CD4-positive, alpha-beta T cell (primary cell): ENCODE measurements at regions of chr7 and their contacts with region 1.

Region 1: GRCh38 chr7:129502376-129502776 is at the start of gene SMKR1:
- DNase-seq: peak; percentile 88 to 98 (median 94)
- ATAC-seq: peak; percentile 96
- H3K4me3 ChIP-seq: peak within 1 kb of the TSS; percentile 66
- H3K4me3 Mint-ChIP-seq: peak within 1 kb of the TSS; percentile 90
- H3K27ac ChIP-seq: peak within 1 kb of the TSS in 1 of 2 donors; percentile 13
- H3K27ac Mint-ChIP-seq: peak within 1 kb of the TSS; percentile 52
- H3K4me1 ChIP-seq: peaks cover 19% of the 10 kb centered on the region
- H3K4me1 Mint-ChIP-seq: peaks cover 6% of the 10 kb centered on the region
- H3K27me3 ChIP-seq: no peaks in the 10 kb centered on the region
- H3K27me3 Mint-ChIP-seq: no peaks in the 10 kb centered on the region
- CTCF ChIP-seq: no peak
- total RNA-seq, gene SMKR1: 0.22 to 0.49 TPM

Region 2: DNA sequence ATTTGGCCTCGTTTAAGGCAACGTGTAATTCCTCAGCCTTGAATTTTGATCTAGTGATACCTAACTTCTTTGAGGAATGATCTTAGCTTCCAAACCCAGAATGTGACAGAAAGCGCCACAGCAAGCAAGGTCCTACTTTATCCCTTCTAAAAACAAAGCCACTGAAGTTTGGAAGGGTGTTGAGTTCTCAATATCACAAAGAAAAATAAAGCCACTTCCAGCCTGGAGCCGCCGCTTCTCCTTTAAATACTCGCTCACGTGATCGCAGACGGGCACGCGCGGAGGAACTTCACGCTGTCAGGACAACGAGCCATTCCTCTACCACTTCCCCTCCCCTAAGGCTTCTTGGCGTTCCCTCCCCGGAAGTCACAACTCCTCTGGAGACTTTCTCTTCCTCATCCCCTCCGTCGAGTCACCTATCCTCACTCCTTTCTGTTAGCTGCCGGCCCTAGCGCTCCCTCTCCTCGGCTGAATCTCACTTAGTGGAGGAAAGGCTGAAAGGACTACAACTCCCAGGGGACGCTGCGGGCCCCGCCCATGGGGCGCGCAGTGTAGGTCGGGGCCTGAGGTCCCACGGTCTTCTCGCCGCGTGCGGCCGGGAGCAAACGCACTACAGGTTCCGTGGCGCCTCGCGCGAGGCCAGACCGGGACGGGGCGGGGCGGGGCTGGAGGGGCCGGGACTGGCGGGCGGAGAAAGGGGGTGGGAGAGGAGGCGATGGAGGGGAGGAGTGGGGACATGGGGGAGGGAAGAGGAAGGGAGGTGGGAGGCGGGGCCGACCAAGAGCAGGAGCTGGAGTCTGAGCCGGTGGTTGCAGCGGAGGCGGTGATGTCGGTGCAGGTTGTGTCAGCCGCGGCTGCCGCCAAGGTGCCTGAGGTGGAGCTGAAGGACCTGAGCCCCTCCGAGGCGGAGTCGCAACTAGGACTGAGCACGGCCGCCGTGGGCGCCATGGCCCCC is 277.8 kb before region 1 on chr7 and contains the start of gene AHCYL2:
- CTCF ChIA-PET with region 1: no interaction called
- POLR2A ChIA-PET with region 1: no interaction called
- intact Hi-C with region 1: loop called in 1 of 2 experiments (anchors 10 kb)
- DNase-seq: peak; percentile 96 to 99 (median 98)
- ATAC-seq: peak; percentile 89
- H3K4me3 ChIP-seq: peak within 1 kb of the TSS; percentile 91
- H3K4me3 Mint-ChIP-seq: peak within 1 kb of the TSS; percentile 96
- H3K27ac ChIP-seq: peak within 1 kb of the TSS; percentile 72 to 97
- H3K27ac Mint-ChIP-seq: peak within 1 kb of the TSS; percentile 89
- H3K4me1 ChIP-seq: peaks cover 25% of the 10 kb centered on the region
- H3K4me1 Mint-ChIP-seq: peaks cover 56% of the 10 kb centered on the region
- H3K27me3 ChIP-seq: no peaks in the 10 kb centered on the region
- H3K27me3 Mint-ChIP-seq: no peaks in the 10 kb centered on the region
- CTCF ChIP-seq: no peak
- total RNA-seq, gene AHCYL2: 5.8 to 6.0 TPM

Region 3: DNA sequence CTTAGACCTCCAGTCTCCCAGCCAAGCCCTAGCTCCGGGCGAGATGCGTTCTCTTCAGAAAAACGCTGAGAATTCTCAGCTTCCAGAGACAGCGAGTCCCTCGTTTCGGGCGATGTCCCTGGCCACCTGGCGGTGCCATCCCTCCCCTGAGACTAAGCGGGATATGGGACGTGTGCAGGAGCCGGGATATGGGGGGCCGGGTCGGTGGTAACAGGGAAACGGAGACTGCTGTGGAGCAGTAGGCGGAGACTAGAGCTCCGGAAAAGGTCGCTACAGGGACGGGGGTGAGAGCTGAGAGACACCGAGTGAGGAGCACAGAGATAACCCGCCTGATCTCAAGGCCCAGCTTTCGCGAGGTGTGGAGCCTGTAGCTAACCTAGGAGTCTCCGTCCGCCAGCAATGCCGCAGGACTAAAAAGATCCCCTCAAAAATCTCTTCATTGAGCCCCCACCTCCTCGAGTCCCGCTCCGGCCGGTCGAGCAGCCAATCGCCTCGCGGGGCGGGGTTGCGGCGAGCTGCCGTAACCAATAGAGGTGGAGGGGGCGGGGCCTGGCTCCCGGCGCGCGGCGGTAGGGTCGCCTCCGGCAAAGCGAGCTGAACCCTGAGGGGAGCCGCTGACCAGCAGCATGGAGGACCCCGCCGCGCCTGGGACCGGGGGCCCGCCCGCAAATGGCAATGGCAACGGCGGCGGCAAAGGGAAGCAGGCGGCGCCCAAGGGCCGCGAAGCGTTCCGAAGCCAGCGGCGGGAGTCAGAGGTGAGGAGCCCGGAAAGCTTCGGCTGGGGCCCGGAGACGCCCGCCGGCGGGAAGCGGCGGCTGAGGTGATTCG is 68.3 kb before region 1 on chr7 and contains the start of gene STRIP2:
- CTCF ChIA-PET with region 1: no interaction called
- POLR2A ChIA-PET with region 1: interaction called, 3 read pairs
- intact Hi-C with region 1: loop called in 1 of 2 experiments (anchors 5 kb)
- DNase-seq: peak; percentile 68 to 92 (median 84)
- ATAC-seq: peak; percentile 94
- H3K4me3 ChIP-seq: peak within 1 kb of the TSS; percentile 88
- H3K4me3 Mint-ChIP-seq: peak within 1 kb of the TSS; percentile 95
- H3K27ac ChIP-seq: no peak within 1 kb of the TSS
- H3K27ac Mint-ChIP-seq: peak within 1 kb of the TSS; percentile 34
- H3K4me1 ChIP-seq: peaks cover 19% of the 10 kb centered on the region
- H3K4me1 Mint-ChIP-seq: peaks cover 23% of the 10 kb centered on the region
- H3K27me3 ChIP-seq: peaks cover 15 to 30% of the 10 kb centered on the region in 2 experiments
- H3K27me3 Mint-ChIP-seq: peaks cover 35% of the 10 kb centered on the region
- CTCF ChIP-seq: peak; percentile 16
- total RNA-seq, gene STRIP2: 0.11 to 0.14 TPM

Region 4: GRCh38 chr7:129635300-129636029 is 133.1 kb after region 1 on chr7:
- CTCF ChIA-PET with region 1: no interaction called
- POLR2A ChIA-PET with region 1: no interaction called
- intact Hi-C with region 1: loop called (anchors 5 to 10 kb)
- DNase-seq: peak; percentile 51 to 86 (median 59)
- ATAC-seq: peak; percentile 98
- H3K4me3 ChIP-seq: no peak overlapping the region
- H3K4me3 Mint-ChIP-seq: no peak overlapping the region
- H3K27ac ChIP-seq: no peak overlapping the region
- H3K27ac Mint-ChIP-seq: peak overlapping the region; percentile 19
- H3K4me1 ChIP-seq: peaks cover 11% of the 10 kb centered on the region
- H3K4me1 Mint-ChIP-seq: peaks cover 63% of the 10 kb centered on the region
- H3K27me3 ChIP-seq: no peaks in the 10 kb centered on the region
- H3K27me3 Mint-ChIP-seq: no peaks in the 10 kb centered on the region
- CTCF ChIP-seq: peak; percentile 76

Region 5: DNA sequence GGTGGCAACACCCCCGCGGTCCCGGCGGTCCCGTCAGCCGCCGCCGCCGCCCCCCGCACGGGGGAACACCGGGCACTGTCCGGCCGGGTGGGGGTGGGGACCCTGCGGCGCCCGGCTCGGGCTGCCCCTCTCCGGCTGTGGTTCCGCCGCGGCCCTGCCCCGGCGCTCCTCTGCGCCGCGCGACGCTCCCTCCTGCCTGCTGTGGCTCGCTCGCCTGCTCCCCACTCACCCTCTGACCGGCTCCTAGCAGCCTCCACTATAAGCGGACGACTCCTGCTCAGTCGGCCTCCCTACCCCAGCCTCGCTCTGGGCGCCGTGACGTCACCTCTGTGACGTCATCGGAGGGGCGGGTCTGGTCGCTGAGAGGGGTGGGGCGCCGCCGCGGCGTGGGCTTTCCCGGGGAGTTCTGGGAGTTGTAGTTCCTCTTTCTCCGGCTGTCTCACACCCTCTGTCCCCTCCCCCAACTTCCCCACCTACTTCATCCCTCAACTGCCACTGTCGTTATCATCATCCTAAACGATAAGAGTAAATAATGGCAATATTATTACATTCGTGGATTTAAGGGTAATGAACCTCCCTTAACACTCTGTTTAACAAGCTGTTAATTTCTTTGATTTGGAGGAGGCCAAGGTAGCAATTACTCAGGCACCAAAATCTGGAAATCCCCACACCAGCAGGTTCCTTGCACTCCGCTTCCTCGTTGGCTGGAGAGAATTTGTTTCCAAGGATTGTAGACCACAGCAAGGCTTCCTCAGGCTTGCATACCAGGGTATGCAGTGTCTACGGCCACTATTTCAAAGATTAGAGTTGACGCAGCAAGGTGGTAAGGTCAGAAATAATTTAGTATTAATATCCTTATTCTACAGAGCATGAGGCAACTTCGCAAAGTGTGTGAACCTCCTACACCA is 450.5 kb after region 1 on chr7 and contains the start of gene UBE2H:
- CTCF ChIA-PET with region 1: no interaction called
- POLR2A ChIA-PET with region 1: no interaction called
- intact Hi-C with region 1: loop called in 1 of 2 experiments (anchors 5 kb)
- DNase-seq: peak; percentile 84 to 96 (median 91)
- ATAC-seq: peak; percentile 75
- H3K4me3 ChIP-seq: peak within 1 kb of the TSS; percentile 78
- H3K4me3 Mint-ChIP-seq: peak within 1 kb of the TSS; percentile 99
- H3K27ac ChIP-seq: peak within 1 kb of the TSS; percentile 82 to 89
- H3K27ac Mint-ChIP-seq: no peak within 1 kb of the TSS
- H3K4me1 ChIP-seq: peaks cover 35% of the 10 kb centered on the region
- H3K4me1 Mint-ChIP-seq: peaks cover 6% of the 10 kb centered on the region
- H3K27me3 ChIP-seq: no peaks in the 10 kb centered on the region
- H3K27me3 Mint-ChIP-seq: no peaks in the 10 kb centered on the region
- CTCF ChIP-seq: no peak
- total RNA-seq, gene UBE2H: 52.1 to 52.5 TPM

Region 6: DNA sequence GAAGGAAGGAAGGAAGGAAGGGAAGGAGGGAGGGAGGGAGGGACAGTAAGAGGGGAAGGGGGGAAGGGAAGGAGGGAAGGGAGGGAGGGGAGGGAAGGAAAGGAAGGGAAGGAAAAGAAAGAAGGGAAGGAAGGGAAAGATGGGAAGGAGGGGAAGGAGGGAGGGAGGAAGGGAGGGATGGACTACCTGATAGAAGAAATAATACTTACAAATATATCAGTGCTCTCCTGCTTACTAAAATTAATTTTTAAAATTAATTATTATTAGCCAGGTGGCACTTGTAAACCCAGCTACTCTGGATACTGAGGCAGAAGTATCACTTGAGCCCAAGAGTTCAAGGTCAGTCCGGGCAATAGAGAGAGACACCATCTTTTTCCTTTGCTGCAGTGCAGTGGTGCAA is 530.3 kb after region 1 on chr7:
- CTCF ChIA-PET with region 1: no interaction called
- POLR2A ChIA-PET with region 1: no interaction called
- intact Hi-C with region 1: no loop called
- DNase-seq: no peak
- ATAC-seq: no peak
- H3K4me3 ChIP-seq: no peak overlapping the region
- H3K4me3 Mint-ChIP-seq: no peak overlapping the region
- H3K27ac ChIP-seq: no peak overlapping the region
- H3K27ac Mint-ChIP-seq: no peak overlapping the region
- H3K4me1 ChIP-seq: no peaks in the 10 kb centered on the region
- H3K4me1 Mint-ChIP-seq: no peaks in the 10 kb centered on the region
- H3K27me3 ChIP-seq: no peaks in the 10 kb centered on the region
- H3K27me3 Mint-ChIP-seq: no peaks in the 10 kb centered on the region
- CTCF ChIP-seq: no peak

Region 7: GRCh38 chr7:130050773-130051125 is 548.4 kb after region 1 on chr7:
- CTCF ChIA-PET with region 1: no interaction called
- POLR2A ChIA-PET with region 1: no interaction called
- intact Hi-C with region 1: loop called in 1 of 2 experiments (anchors 10 kb)
- DNase-seq: no peak
- ATAC-seq: no peak
- H3K4me3 ChIP-seq: peak overlapping the region; percentile 85
- H3K4me3 Mint-ChIP-seq: peak overlapping the region; percentile 98
- H3K27ac ChIP-seq: peak overlapping the region; percentile 29 to 45
- H3K27ac Mint-ChIP-seq: peak overlapping the region; percentile 81
- H3K4me1 ChIP-seq: peaks cover 15% of the 10 kb centered on the region
- H3K4me1 Mint-ChIP-seq: peaks cover 10% of the 10 kb centered on the region
- H3K27me3 ChIP-seq: no peaks in the 10 kb centered on the region
- H3K27me3 Mint-ChIP-seq: no peaks in the 10 kb centered on the region
- CTCF ChIP-seq: no peak